Aorta (tissue), 5 donors: ENCODE measurements at regions of chr7 and their contacts with region 1.

Region 1: DNA sequence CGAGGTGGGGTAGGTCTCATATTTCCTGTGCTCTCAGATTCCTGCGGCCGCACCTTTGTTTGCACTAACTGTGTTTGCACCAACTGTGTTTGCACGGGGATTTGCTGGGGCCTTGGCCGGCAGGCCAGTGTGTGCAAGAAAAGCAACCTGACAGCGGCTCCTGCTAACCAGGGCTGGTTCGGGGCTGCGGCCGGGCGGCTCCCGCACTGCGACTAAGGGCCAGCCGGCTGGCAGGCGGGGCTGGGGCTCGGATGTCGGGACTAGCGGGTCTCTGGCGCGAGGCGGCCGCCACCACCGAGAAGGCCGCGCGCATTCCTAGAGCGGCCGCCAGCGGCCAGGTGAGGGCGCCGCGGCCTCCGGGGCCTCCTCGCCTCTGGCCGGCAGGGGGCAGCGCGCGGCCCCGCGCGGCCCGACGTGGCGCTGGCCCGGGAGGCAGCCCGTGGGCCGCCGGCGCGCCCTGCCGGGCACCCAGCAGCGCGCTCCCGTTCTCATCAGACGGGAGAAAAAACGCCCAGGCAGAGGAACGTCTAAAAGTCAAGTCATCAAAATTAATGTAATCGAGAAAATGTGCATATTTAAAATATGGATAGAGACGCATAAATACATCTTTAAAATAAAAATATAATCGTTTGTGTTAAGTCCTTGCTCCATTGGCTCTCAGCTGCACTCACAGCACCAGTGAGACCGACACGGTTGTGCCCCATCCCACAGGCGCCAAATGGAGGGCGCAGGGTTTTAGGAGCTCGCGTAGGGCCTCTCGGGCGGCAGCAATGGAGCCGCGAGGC is 38.5 kb downstream of the ZNF777 start:
- DNase-seq: peak; percentile 61 to 84
- ATAC-seq: peak; percentile 91
- H3K4me3 ChIP-seq: peak overlapping the region; percentile 25 to 30
- H3K27ac ChIP-seq: no peak overlapping the region
- H3K4me1 ChIP-seq: no peaks in the 10 kb centered on the region
- H3K27me3 ChIP-seq: no peaks in the 10 kb centered on the region

Region 2: GRCh38 chr7:149284850-149285626 is 137.3 kb before region 1 on chr7:
- intact Hi-C with region 1: loop called in 1 of 2 experiments (anchors 10 kb)
- DNase-seq: peak; percentile 96 to 97
- ATAC-seq: peak; percentile 94
- H3K4me3 ChIP-seq: peak overlapping the region; percentile 11 to 53
- H3K27ac ChIP-seq: no peak overlapping the region
- H3K4me1 ChIP-seq: no peaks in the 10 kb centered on the region
- H3K27me3 ChIP-seq: no peaks in the 10 kb centered on the region